CD4-positive, alpha-beta memory T cell (primary cell): ENCODE measurements at regions of chr5 and their contacts with region 1.

Region 1: DNA sequence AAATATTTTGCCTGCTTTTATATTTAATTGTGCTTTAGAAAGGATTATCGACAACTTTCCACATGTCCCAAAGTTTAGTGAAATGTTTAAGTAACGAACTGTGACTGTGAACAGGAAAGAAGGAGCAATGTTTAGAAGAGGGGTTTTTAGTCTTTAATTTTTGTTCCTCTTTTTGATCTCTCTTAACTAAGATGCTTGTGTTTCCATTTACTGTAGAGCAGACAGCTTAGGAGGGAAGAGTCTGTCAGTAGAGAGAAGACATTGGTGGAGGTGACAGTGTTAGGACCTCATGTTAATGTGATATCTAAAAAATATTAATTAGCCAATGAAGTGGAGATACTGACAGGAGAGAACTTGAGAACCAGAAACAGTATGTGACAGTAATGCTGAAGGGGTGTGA is 92.2 kb downstream of the RASGRF2 start:
- DNase-seq: no peak
- H3K4me3 ChIP-seq: no peak overlapping the region
- H3K4me3 Mint-ChIP-seq: no peak overlapping the region
- H3K27ac ChIP-seq: no peak overlapping the region
- H3K27ac Mint-ChIP-seq: peak overlapping the region in 1 of 7 donors; percentile 8
- H3K4me1 ChIP-seq: no peaks in the 10 kb centered on the region
- H3K4me1 Mint-ChIP-seq: peaks cover 12 to 36% (median 15%) of the 10 kb centered on the region in 4 donors
- H3K27me3 ChIP-seq: no peaks in the 10 kb centered on the region
- H3K27me3 Mint-ChIP-seq: no peaks in the 10 kb centered on the region

Region 2: GRCh38 chr5:80745490-80745889 is 306.8 kb before region 1 on chr5:
- CTCF ChIA-PET with region 1: no interaction called
- POLR2A ChIA-PET with region 1: no interaction called
- intact Hi-C with region 1: no loop called
- DNase-seq: no peak
- H3K4me3 ChIP-seq: no peak overlapping the region
- H3K4me3 Mint-ChIP-seq: no peak overlapping the region
- H3K27ac ChIP-seq: no peak overlapping the region
- H3K27ac Mint-ChIP-seq: no peak overlapping the region
- H3K4me1 ChIP-seq: peaks cover 23% of the 10 kb centered on the region
- H3K4me1 Mint-ChIP-seq: peaks cover 15 to 48% (median 23%) of the 10 kb centered on the region in 4 donors
- H3K27me3 ChIP-seq: no peaks in the 10 kb centered on the region
- H3K27me3 Mint-ChIP-seq: no peaks in the 10 kb centered on the region

Region 3: GRCh38 chr5:81020478-81021174 is 31.7 kb before region 1 on chr5:
- CTCF ChIA-PET with region 1: no interaction called
- POLR2A ChIA-PET with region 1: no interaction called
- intact Hi-C with region 1: no loop called
- DNase-seq: no peak
- H3K4me3 ChIP-seq: no peak overlapping the region
- H3K4me3 Mint-ChIP-seq: peak overlapping the region in 4 of 8 donors; percentile 4 to 23 (median 14)
- H3K27ac ChIP-seq: no peak overlapping the region
- H3K27ac Mint-ChIP-seq: peak overlapping the region in 3 of 7 donors; percentile 31 to 47 (median 43)
- H3K4me1 ChIP-seq: peaks cover 56% of the 10 kb centered on the region
- H3K4me1 Mint-ChIP-seq: peaks cover 62 to 95% (median 73%) of the 10 kb centered on the region in 4 donors
- H3K27me3 ChIP-seq: no peaks in the 10 kb centered on the region
- H3K27me3 Mint-ChIP-seq: no peaks in the 10 kb centered on the region

Region 4: DNA sequence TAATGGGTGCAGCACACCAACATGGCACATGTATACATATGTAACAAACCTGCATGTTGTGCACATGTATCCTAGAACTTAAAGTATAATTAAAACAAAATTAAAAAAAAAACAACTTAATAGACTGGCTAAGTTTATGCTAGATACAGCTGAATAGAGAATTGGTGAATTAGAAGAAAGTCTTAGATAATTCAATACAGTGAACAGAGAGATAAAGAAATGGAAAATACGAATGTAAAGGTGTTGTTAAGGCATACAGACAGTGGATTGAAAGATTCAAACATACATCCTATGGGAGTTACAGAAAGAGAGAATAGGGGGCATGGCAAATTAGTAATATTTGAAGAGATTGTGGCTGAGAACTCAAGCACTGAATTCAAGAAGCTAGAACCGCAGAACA is 16.8 kb before region 1 on chr5:
- CTCF ChIA-PET with region 1: no interaction called
- POLR2A ChIA-PET with region 1: no interaction called
- intact Hi-C with region 1: no loop called
- DNase-seq: no peak
- H3K4me3 ChIP-seq: no peak overlapping the region
- H3K4me3 Mint-ChIP-seq: no peak overlapping the region
- H3K27ac ChIP-seq: no peak overlapping the region
- H3K27ac Mint-ChIP-seq: no peak overlapping the region
- H3K4me1 ChIP-seq: no peaks in the 10 kb centered on the region
- H3K4me1 Mint-ChIP-seq: peaks cover 10 to 16% (median 14%) of the 10 kb centered on the region in 4 donors
- H3K27me3 ChIP-seq: no peaks in the 10 kb centered on the region
- H3K27me3 Mint-ChIP-seq: no peaks in the 10 kb centered on the region

Region 5: DNA sequence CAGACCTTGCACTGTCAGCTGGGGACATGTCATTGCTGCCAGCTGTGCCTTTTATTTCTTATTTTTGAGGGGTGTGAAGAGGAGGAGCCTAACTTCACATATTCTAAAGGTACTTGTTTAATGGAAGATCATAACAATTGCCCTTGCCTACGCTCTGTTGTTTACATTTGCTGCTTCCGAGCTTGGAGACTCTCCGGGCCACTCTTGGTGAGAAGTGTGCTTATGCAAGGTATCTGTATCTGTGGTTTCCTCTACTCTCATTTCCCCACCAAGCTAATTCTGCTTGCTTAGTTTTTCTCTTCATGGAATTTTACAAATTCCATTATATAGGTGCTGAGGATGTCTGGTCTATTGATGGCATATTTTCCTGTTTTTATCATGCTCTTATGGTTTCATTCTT is 13.2 kb after region 1 on chr5:
- CTCF ChIA-PET with region 1: no interaction called
- POLR2A ChIA-PET with region 1: no interaction called
- intact Hi-C with region 1: loop called (anchors 1 kb)
- DNase-seq: no peak
- H3K4me3 ChIP-seq: no peak overlapping the region
- H3K4me3 Mint-ChIP-seq: peak overlapping the region in 1 of 8 donors; percentile 3
- H3K27ac ChIP-seq: no peak overlapping the region
- H3K27ac Mint-ChIP-seq: peak overlapping the region in 3 of 7 donors; percentile 36 to 78 (median 49)
- H3K4me1 ChIP-seq: peaks cover 5% of the 10 kb centered on the region
- H3K4me1 Mint-ChIP-seq: peaks cover 7 to 40% (median 20%) of the 10 kb centered on the region in 4 donors
- H3K27me3 ChIP-seq: no peaks in the 10 kb centered on the region
- H3K27me3 Mint-ChIP-seq: no peaks in the 10 kb centered on the region

Region 6: DNA sequence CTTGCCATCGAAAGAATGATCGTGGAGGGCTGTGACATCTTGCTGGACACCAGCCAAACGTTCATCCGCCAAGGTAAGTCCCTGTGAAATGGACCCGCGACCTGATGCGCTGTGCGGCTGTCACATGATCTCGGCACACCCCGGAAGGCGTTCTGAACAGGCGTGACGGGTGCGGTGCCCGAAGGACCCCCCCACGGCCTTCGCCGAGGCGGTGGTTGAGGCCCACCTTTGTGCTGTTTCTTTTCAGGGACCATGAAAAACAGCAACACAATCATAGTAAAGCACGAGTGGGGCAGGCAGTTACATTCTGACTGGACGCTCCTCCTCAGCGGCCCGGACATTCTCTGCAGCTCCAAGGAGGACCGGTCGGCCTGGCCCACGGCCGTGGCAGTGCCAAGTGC is 34.6 kb after region 1 on chr5:
- CTCF ChIA-PET with region 1: no interaction called
- POLR2A ChIA-PET with region 1: no interaction called
- intact Hi-C with region 1: no loop called
- DNase-seq: no peak
- H3K4me3 ChIP-seq: no peak overlapping the region
- H3K4me3 Mint-ChIP-seq: no peak overlapping the region
- H3K27ac ChIP-seq: no peak overlapping the region
- H3K27ac Mint-ChIP-seq: no peak overlapping the region
- H3K4me1 ChIP-seq: no peaks in the 10 kb centered on the region
- H3K4me1 Mint-ChIP-seq: peaks cover 0 to 7% (median 3%) of the 10 kb centered on the region in 4 donors
- H3K27me3 ChIP-seq: no peaks in the 10 kb centered on the region
- H3K27me3 Mint-ChIP-seq: no peaks in the 10 kb centered on the region